Activated CD4-positive, alpha-beta memory T cell treated with anti-CD3 and anti-CD28 coated beads for 36 hours (primary cell): ENCODE measurements at regions of chr10 and their contacts with region 1.

Region 1: GRCh38 chr10:127906548-127907377 is at the start of gene PTPRE:
- DNase-seq: peak; percentile 78
- H3K4me3 Mint-ChIP-seq: peak within 1 kb of the TSS; percentile 25
- H3K27ac Mint-ChIP-seq: no peak within 1 kb of the TSS
- H3K4me1 Mint-ChIP-seq: no peaks in the 10 kb centered on the region
- H3K27me3 Mint-ChIP-seq: peaks cover 27% of the 10 kb centered on the region
- total RNA-seq, gene PTPRE: 29.4 to 34.0 TPM

Region 2: GRCh38 chr10:127196230-127196954 is 710.4 kb before region 1 on chr10 and contains the start of gene INSYN2A:
- CTCF ChIA-PET with region 1: no interaction called
- POLR2A ChIA-PET with region 1: no interaction called
- intact Hi-C with region 1: no loop called
- DNase-seq: no peak
- H3K4me3 Mint-ChIP-seq: no peak within 1 kb of the TSS
- H3K27ac Mint-ChIP-seq: no peak within 1 kb of the TSS
- H3K4me1 Mint-ChIP-seq: no peaks in the 10 kb centered on the region
- H3K27me3 Mint-ChIP-seq: peaks cover 26% of the 10 kb centered on the region
- total RNA-seq, gene INSYN2A: not detected

Region 3: GRCh38 chr10:127850944-127851343 is 55.8 kb before region 1 on chr10:
- CTCF ChIA-PET with region 1: no interaction called
- POLR2A ChIA-PET with region 1: no interaction called
- intact Hi-C with region 1: no loop called
- DNase-seq: no peak
- H3K4me3 Mint-ChIP-seq: no peak overlapping the region
- H3K27ac Mint-ChIP-seq: no peak overlapping the region
- H3K4me1 Mint-ChIP-seq: peaks cover 6% of the 10 kb centered on the region
- H3K27me3 Mint-ChIP-seq: peaks cover 2% of the 10 kb centered on the region

Region 4: GRCh38 chr10:127874671-127875446 is 31.9 kb before region 1 on chr10:
- CTCF ChIA-PET with region 1: no interaction called
- POLR2A ChIA-PET with region 1: no interaction called
- intact Hi-C with region 1: no loop called
- DNase-seq: no peak
- H3K4me3 Mint-ChIP-seq: no peak overlapping the region
- H3K27ac Mint-ChIP-seq: no peak overlapping the region
- H3K4me1 Mint-ChIP-seq: peaks cover 2% of the 10 kb centered on the region
- H3K27me3 Mint-ChIP-seq: peaks cover 17% of the 10 kb centered on the region

Region 5: DNA sequence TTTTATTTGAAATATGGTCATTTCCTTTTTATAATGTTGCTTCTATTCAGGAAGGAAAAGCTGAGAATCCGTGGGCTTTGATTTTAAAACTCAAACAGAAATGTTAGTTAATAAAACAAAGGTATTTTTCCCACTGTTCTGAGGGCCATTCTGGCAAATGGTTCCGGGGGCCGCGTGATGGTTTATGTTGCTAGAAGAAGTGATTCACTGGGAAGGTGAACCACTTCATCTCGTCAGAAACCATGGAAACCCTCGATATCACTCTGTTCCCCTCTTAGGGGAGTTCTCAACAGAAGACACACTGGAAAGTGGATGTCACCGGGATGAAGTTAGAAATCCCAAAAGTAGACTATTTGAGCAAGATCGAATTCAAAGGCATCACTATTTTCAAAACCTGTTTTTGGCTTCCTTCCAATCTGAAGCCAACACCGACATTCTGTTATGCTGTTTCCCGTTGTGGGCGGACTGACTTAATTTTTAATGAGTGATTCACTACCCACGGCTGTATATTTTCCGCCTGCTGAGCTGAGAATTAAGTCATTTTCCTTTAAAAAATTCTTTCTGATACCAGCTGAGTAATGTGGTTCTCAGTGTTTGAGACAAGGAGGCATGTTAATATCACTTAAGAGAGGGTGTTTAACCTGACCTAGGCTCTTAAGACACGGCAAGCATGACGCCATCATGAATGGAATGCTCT is 84.2 kb after region 1 on chr10:
- CTCF ChIA-PET with region 1: interaction called, 34 read pairs
- POLR2A ChIA-PET with region 1: no interaction called
- intact Hi-C with region 1: loop called (anchors 5 kb)
- DNase-seq: peak; percentile 80
- H3K4me3 Mint-ChIP-seq: peak overlapping the region; percentile 54
- H3K27ac Mint-ChIP-seq: peak overlapping the region; percentile 92
- H3K4me1 Mint-ChIP-seq: peaks cover 56% of the 10 kb centered on the region
- H3K27me3 Mint-ChIP-seq: peaks cover 2% of the 10 kb centered on the region

Region 6: GRCh38 chr10:128018236-128018635 is 111.5 kb after region 1 on chr10:
- CTCF ChIA-PET with region 1: interaction called, 270 read pairs
- POLR2A ChIA-PET with region 1: no interaction called
- intact Hi-C with region 1: no loop called
- DNase-seq: no peak
- H3K4me3 Mint-ChIP-seq: no peak overlapping the region
- H3K27ac Mint-ChIP-seq: no peak overlapping the region
- H3K4me1 Mint-ChIP-seq: peaks cover 8% of the 10 kb centered on the region
- H3K27me3 Mint-ChIP-seq: peaks cover 3% of the 10 kb centered on the region

Region 7: DNA sequence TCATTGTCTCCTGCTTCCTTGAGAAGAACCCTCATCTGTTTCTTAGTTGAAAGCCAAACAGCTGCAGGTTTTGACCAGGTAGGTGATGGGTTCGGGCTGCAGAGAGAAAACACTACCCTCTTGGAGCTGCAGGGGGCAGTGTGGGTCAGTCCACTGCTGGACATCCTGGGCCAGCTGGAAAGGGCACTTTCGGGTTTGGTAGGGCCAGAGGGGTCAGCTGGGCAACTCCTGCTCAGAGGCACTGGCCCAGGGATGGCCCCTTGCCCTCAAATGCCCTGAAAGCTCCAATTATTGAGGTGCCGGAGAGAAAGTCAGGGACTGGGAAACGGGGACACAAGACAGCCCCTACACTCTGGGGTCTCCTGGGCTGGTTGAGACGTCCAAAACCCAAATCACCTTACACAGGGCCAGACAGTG is 128.8 kb after region 1 on chr10:
- CTCF ChIA-PET with region 1: interaction called, 22 read pairs
- POLR2A ChIA-PET with region 1: no interaction called
- intact Hi-C with region 1: no loop called
- DNase-seq: peak; percentile 78
- H3K4me3 Mint-ChIP-seq: no peak overlapping the region
- H3K27ac Mint-ChIP-seq: no peak overlapping the region
- H3K4me1 Mint-ChIP-seq: peaks cover 9% of the 10 kb centered on the region
- H3K27me3 Mint-ChIP-seq: no peaks in the 10 kb centered on the region

Region 8: DNA sequence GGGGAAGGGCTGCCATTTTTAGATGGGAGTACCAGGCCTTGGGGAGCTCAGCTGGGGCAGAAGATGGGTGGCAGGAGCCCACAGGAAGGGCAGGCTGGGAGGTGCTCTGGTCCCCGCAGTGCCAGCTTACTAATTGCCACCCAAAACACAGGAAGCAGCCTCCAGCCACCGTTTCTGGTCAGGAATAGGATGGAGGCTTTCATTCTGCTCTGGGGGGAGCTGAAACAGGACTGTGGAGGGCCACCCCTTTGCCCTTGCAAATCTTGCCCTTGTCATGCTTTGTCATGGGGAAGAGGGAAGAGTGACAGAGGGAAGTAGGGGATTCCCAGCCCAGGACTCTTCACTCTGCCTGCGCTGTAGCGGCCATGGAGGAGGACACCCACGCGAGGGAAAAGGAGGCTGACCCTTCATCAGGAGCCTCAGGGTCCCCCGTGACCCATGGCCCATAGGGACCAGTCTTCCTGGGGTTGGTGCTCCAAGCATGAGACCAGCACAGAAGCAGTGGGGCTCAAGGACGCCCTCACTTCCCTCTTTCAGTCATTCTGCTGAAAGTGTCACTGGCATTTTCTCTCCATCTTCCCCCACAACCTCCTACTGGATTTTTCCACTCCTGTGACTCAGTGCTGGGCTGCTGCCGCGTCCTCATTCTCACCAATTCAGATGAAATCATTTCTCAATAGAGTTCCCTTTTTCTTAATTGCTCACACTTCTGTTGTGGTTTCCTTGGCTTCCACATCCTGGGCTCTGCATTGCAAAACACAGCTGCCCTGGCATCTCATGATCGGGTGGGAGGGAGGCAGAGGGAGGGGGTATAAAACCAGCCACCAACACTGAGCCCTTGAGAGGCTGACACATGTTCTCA is 157.6 kb after region 1 on chr10:
- CTCF ChIA-PET with region 1: interaction called, 50 read pairs
- POLR2A ChIA-PET with region 1: interaction called, 3 read pairs
- intact Hi-C with region 1: loop called (anchors 1 kb)
- DNase-seq: peak; percentile 91
- H3K4me3 Mint-ChIP-seq: peak overlapping the region; percentile 59
- H3K27ac Mint-ChIP-seq: peak overlapping the region; percentile 96
- H3K4me1 Mint-ChIP-seq: peaks cover 58% of the 10 kb centered on the region
- H3K27me3 Mint-ChIP-seq: no peaks in the 10 kb centered on the region

Region 9: DNA sequence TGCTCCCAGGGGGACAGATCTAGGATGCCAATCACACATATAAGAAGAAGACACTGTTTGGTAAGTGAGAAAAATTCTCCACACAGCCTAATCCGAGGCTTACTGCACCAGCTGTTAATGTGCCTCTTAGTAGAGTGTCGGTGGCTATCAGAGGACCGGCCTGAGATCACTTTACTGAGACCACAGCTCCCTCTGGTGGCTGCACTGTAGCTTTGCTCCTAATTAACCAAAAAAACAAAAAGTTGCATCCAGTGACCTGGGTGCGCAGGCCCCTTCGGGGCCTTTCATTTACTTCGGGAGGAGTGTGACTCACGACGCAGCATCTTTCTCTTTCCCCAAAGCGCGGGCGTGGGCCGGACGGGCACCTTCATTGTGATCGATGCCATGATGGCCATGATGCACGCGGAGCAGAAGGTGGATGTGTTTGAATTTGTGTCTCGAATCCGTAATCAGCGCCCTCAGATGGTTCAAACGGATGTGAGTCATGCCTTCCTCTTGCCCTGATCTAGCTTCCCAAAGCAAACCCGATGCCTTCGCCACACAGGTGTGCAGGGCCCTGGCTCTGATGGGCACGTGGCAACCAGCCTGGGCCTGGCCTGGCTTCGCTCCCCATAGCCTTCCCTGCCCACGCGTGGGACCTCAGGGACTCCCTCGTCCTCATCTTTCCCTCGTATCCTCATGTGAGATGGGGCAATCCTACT is 162.7 kb after region 1 on chr10:
- CTCF ChIA-PET with region 1: interaction called, 50 read pairs
- POLR2A ChIA-PET with region 1: interaction called, 3 read pairs
- intact Hi-C with region 1: loop called (anchors 1 kb)
- DNase-seq: peak; percentile 86
- H3K4me3 Mint-ChIP-seq: no peak overlapping the region
- H3K27ac Mint-ChIP-seq: no peak overlapping the region
- H3K4me1 Mint-ChIP-seq: peaks cover 35% of the 10 kb centered on the region
- H3K27me3 Mint-ChIP-seq: no peaks in the 10 kb centered on the region

Region 10: DNA sequence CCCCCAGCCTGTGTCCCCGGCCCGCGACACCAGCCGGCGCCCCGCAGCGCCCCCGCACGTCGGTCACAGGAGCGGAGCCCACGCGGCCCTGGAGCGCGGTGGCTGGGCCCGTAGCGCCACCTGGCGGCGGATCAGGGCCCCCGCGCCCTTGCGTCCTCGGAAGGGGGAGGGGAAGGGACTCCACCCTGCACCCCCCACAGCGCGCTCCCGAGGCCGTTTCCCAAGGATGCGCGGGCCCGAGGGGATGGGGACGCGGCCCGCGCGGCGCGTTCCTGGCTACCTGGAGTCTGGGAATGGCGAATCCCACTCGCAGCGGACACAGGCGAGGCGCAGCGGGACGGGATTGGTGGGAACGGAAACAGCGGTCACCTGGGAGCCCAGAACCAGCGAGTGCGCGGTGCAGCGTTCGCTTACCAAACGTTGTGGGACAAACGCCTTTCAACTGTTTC is 243.3 kb after region 1 on chr10:
- CTCF ChIA-PET with region 1: interaction called, 3 read pairs
- POLR2A ChIA-PET with region 1: no interaction called
- intact Hi-C with region 1: loop called (anchors 2 kb)
- DNase-seq: peak; percentile 82
- H3K4me3 Mint-ChIP-seq: peak overlapping the region; percentile 72
- H3K27ac Mint-ChIP-seq: no peak overlapping the region
- H3K4me1 Mint-ChIP-seq: peaks cover 20% of the 10 kb centered on the region
- H3K27me3 Mint-ChIP-seq: no peaks in the 10 kb centered on the region